ENCODE measurements at regions of chr5 and their contacts with region 1.

Region 1: DNA sequence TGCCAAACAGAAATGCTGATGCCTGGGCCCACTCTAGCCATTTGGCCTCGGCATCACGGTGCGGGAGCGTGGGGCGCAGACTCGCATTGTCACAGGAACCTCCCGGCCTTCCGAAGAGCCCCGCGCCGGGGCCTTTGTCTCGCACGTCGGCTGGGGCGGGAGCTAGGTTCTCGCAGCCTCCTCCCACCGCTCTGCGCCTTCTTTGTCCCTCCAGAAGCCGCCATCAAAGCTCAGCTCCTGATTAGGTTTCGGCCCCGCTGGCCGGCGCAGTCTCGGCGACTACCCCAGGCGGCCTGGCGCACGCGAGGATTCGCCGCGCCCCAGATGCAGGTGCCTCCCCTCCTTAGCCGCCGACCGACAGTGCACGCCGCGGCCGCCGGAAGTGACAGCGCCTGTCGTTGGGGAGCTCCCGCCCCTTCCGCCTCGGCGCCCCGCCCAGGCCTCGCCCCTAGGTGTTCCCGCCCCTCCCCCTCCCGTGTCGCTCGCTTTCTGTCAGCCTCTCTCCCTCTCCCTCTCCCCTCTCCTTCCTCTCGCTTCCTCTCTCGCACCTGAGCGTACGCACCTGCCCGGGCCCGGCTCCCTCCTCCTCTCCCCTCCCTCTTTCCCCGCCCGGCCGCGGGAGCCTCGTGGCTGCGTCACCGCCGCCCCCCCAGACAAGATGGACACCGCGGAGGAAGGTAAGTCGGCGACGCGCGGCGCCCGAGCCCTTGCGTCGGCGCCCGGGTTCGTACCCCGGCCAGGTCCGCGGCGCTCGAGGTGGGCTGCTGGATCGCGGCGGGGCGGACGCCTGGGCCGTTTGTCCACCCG is at the start of gene MARCHF6:
- DNase-seq: peak; percentile 98
- H3K4me3 ChIP-seq: peak within 1 kb of the TSS; percentile 83 to 97 (median 93)
- H3K27ac ChIP-seq: peak within 1 kb of the TSS; percentile 97 to 98 (median 98)
- H3K4me1 ChIP-seq: peaks cover 28 to 53% (median 46%) of the 10 kb centered on the region in 4 donors
- H3K27me3 ChIP-seq: no peaks in the 10 kb centered on the region
- CTCF ChIP-seq: no peak
- EP300 ChIP-seq: no peak
- POLR2A ChIP-seq: peak; percentile 84
- total RNA-seq, gene MARCHF6: 76.5 to 121 (median 92.9) TPM

Region 2: GRCh38 chr5:10249948-10250803 is 103.3 kb before region 1 on chr5 and contains the start of gene CCT5:
- intact Hi-C with region 1: loop called (anchors 5 kb)
- DNase-seq: peak; percentile 97
- H3K4me3 ChIP-seq: peak within 1 kb of the TSS; percentile 82 to 93 (median 90)
- H3K27ac ChIP-seq: peak within 1 kb of the TSS; percentile 85 to 94 (median 91)
- H3K4me1 ChIP-seq: peaks cover 25 to 47% (median 39%) of the 10 kb centered on the region in 4 donors
- H3K27me3 ChIP-seq: no peaks in the 10 kb centered on the region
- CTCF ChIP-seq: no peak
- EP300 ChIP-seq: no peak
- POLR2A ChIP-seq: no peak
- total RNA-seq, gene CCT5: 100 to 165 (median 142) TPM